ENCODE measurements at regions of chr1 and their contacts with region 1.

Region 1: DNA sequence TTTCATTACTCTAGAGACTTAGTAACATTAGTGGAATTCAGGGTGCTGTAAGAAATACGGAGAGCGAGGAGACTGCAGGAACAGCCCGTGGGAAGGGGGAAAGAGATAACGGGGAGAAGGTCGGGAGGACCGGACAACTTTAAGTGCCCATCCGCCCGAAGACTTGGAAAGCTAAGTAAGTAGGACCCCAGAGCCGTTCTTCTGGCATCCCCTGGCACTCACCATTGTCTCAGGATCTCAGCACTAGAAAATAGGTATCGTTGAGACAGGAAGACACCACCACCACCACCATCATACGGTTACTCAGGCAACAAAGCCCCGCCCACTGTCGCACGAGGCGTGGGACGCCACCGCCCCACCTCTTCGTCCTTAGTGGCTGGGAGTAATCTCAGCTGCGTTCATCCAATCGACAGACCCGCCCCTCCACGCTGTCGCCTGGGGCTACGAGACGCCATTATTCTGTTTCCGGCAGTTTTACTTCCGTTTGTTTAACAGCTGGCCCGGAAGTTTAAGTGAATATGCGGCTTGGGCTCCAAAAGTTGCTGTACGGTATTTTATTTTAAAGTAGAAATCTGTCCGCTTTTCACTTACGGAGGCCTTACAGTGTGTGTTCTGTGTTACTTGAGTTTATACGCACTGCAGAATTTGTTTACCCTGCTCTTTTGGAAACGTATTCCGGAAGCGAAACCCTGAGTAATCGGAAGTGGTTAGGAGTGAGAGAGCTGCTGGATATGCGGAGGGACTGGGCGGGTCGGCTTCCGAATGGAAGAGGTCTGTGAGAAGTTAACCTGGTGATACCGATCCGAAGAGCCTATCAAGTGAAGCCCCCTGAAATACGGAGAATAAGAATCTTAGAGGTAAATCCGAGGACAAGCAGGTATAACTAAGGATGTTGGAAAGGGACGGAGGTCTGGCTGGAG is at the starts of genes BLZF1 and NME7:
- DNase-seq: peak; percentile 99
- ATAC-seq: peak; percentile 93
- H3K4me3 Mint-ChIP-seq: no peak within 1 kb of the TSS
- H3K27ac Mint-ChIP-seq: no peak within 1 kb of the TSS
- H3K4me1 Mint-ChIP-seq: peaks cover 31% of the 10 kb centered on the region
- H3K27me3 Mint-ChIP-seq: no peaks in the 10 kb centered on the region
- total RNA-seq, gene BLZF1: 6.5 to 7.1 TPM
- total RNA-seq, gene NME7: 11.6 to 15.3 TPM

Region 2: DNA sequence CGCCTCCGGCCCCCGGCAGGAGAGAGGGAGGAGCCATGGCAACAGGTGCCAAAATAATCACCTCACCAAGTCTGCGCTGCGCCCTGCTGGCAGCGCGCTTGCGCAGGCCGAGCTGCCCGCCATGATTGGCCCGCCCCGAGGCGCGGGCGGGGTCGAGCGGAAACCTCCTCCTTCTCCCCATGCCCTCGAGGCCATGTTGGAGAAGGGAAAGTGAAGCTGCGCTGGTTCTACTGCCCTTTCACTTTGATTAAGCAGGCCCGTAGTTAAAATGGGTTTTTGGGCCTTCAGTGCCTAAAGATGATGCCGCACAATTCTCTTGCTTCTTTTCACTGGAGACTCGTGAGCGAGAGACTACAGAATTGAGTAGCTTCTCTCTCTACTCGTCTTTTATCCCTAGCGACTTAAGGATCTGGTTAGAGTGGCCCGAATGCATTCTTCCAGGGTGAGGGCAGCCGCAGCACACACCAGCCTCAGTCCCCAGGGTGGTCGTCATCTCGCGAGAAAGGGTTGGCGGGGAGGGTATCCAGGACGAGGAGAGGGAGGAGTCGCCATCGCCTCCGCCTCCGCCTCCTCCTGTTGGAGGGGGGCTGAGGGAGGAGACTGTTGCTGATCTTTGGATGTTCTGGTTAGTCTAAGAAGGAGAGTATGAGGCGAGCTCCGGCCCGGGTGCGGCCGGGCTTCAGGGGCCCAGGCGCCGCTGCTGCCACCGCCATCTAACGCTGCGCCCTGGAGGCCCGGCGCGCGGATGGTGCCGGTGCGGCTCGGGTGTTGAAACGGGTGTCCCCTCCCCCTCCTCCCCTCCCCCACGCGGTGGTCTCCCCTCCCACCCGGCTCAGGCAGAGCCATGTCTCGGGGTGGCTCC is 1431.4 kb before region 1 on chr1 and contains the start of gene DCAF6:
- CTCF ChIA-PET with region 1: no interaction called
- POLR2A ChIA-PET with region 1: no interaction called
- intact Hi-C with region 1: loop called in 1 of 2 experiments (anchors 1 kb)
- DNase-seq: peak; percentile 97
- ATAC-seq: peak; percentile 84
- H3K4me3 Mint-ChIP-seq: peak within 1 kb of the TSS; percentile 89
- H3K27ac Mint-ChIP-seq: peak within 1 kb of the TSS; percentile 97
- H3K4me1 Mint-ChIP-seq: peaks cover 34% of the 10 kb centered on the region
- H3K27me3 Mint-ChIP-seq: no peaks in the 10 kb centered on the region
- total RNA-seq, gene DCAF6: 25.6 to 28.8 TPM

Region 3: DNA sequence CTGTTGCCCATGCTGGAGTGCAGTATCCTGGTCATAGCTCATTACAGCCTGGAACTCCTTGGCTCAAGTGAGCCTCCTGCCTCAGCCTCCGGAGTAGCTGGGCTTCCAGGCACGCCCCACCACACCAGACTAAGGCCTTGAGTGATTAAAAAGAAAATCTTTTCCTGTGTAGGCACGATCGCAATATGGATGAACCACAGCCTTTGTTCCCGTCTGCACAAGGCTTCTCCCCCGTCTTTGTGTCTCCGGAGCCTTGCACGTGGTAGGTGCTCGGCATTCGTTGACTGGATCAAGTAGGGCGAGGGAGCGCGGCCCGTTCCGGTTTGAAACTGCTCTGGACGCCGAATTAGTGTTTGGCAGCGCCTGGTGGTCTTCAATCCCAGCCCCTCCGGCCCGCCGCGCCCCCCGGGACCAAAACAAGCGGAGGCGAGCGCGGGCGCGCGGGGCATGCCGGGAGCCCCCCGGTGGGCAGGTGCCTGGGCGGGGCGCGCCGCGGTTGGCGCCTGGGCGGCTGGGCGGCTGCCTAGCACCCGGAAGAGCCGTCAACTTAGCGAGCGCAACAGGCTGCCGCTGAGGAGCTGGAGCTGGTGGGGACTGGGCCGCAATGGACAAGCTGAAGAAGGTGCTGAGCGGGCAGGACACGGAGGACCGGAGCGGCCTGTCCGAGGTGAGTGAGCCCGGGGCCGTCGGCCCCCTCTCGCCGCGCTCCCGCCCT is 1142.1 kb before region 1 on chr1 and contains the start of gene SFT2D2:
- CTCF ChIA-PET with region 1: no interaction called
- POLR2A ChIA-PET with region 1: no interaction called
- intact Hi-C with region 1: loop called (anchors 5 kb)
- DNase-seq: peak; percentile 88
- ATAC-seq: peak; percentile 90
- H3K4me3 Mint-ChIP-seq: peak within 1 kb of the TSS; percentile 86
- H3K27ac Mint-ChIP-seq: peak within 1 kb of the TSS; percentile 86
- H3K4me1 Mint-ChIP-seq: peaks cover 49% of the 10 kb centered on the region
- H3K27me3 Mint-ChIP-seq: peaks cover 3% of the 10 kb centered on the region
- total RNA-seq, gene SFT2D2: 25.2 to 42.3 TPM

Region 4: DNA sequence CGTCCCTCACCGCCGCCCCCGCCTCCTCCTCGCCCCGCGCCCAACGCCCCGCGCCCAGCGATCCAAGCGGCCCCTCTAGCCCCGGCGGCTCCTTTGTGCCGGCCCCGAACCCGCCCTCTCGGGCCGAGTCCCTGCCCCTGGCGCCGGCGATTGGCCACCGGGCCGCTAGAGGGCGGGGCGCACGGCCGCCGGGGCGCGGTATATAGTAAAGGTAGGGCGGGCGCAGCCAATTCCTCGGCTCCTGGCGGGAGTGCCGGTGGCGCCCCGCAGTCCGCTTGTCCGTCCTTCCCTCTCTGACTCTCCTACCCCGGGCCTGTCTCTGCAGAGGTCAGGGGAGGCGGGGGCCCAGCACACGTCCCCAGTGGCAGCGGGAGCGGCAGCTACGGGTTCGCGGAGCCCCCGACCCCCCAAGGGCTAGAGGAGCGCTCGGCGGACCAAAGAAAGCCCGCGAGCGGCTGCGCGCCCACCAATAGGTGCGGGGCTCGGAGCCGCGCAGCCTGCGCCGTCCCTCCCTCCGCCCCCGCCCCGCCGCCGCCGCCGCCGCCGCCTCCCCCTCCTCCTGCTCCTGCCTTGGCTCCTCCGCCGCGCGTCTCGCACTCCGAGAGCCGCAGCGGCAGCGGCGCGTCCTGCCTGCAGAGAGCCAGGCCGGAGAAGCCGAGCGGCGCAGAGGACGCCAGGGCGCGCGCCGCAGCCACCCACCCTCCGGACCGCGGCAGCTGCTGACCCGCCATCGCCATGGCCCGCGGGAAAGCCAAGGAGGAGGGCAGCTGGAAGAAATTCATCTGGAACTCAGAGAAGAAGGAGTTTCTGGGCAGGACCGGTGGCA is 261.4 kb before region 1 on chr1 and contains the start of gene ATP1B1:
- CTCF ChIA-PET with region 1: no interaction called
- POLR2A ChIA-PET with region 1: no interaction called
- intact Hi-C with region 1: loop called (anchors 1 to 5 kb)
- DNase-seq: peak; percentile 88
- ATAC-seq: peak; percentile 91
- H3K4me3 Mint-ChIP-seq: peak within 1 kb of the TSS; percentile 78
- H3K27ac Mint-ChIP-seq: peak within 1 kb of the TSS; percentile 63
- H3K4me1 Mint-ChIP-seq: peaks cover 41% of the 10 kb centered on the region
- H3K27me3 Mint-ChIP-seq: peaks cover 18% of the 10 kb centered on the region
- total RNA-seq, gene ATP1B1: 2.9 to 3.3 TPM

Region 5: GRCh38 chr1:169485544-169486278 is 118.0 kb after region 1 on chr1 and contains the start of gene SLC19A2:
- CTCF ChIA-PET with region 1: no interaction called
- POLR2A ChIA-PET with region 1: no interaction called
- intact Hi-C with region 1: loop called (anchors 1 to 5 kb)
- DNase-seq: peak; percentile 96
- ATAC-seq: peak; percentile 99
- H3K4me3 Mint-ChIP-seq: peak within 1 kb of the TSS; percentile 93
- H3K27ac Mint-ChIP-seq: peak within 1 kb of the TSS; percentile 94
- H3K4me1 Mint-ChIP-seq: peaks cover 48% of the 10 kb centered on the region
- H3K27me3 Mint-ChIP-seq: peaks cover 1% of the 10 kb centered on the region
- total RNA-seq, gene SLC19A2: 4.0 to 4.4 TPM

Region 6: GRCh38 chr1:169711469-169712281 is 343.9 kb after region 1 on chr1 and contains the start of gene SELL:
- CTCF ChIA-PET with region 1: no interaction called
- POLR2A ChIA-PET with region 1: no interaction called
- intact Hi-C with region 1: loop called in 1 of 2 experiments (anchors 5 kb)
- DNase-seq: peak; percentile 86
- ATAC-seq: peak; percentile 77
- H3K4me3 Mint-ChIP-seq: peak within 1 kb of the TSS; percentile 83
- H3K27ac Mint-ChIP-seq: peak within 1 kb of the TSS; percentile 93
- H3K4me1 Mint-ChIP-seq: peaks cover 23% of the 10 kb centered on the region
- H3K27me3 Mint-ChIP-seq: peaks cover 4% of the 10 kb centered on the region
- total RNA-seq, gene SELL: 206 to 262 TPM

Region 7: GRCh38 chr1:170074250-170075157 is 706.8 kb after region 1 on chr1 and contains the start of gene KIFAP3:
- CTCF ChIA-PET with region 1: no interaction called
- POLR2A ChIA-PET with region 1: no interaction called
- intact Hi-C with region 1: loop called in 1 of 2 experiments (anchors 10 kb)
- DNase-seq: peak; percentile 98
- ATAC-seq: peak; percentile 99
- H3K4me3 Mint-ChIP-seq: peak within 1 kb of the TSS; percentile 96
- H3K27ac Mint-ChIP-seq: peak within 1 kb of the TSS; percentile 87
- H3K4me1 Mint-ChIP-seq: peaks cover 43% of the 10 kb centered on the region
- H3K27me3 Mint-ChIP-seq: no peaks in the 10 kb centered on the region
- total RNA-seq, gene KIFAP3: 10.9 to 11.5 TPM